ENCODE measurements at regions of chr14 and their contacts with region 1.

Region 1: GRCh38 chr14:21768116-21768874 is 94.7 kb upstream of the OR4E1 start:
- DNase-seq: peak in 4 of 14 experiments; percentile 9 to 72 (median 63)
- ATAC-seq: peak; percentile 91
- H3K4me3 ChIP-seq: peak overlapping the region; percentile 26
- H3K4me3 Mint-ChIP-seq: peak overlapping the region; percentile 69
- H3K27ac ChIP-seq: no peak overlapping the region
- H3K27ac Mint-ChIP-seq: peak overlapping the region; percentile 77
- H3K4me1 ChIP-seq: no peaks in the 10 kb centered on the region
- H3K4me1 Mint-ChIP-seq: peaks cover 6% of the 10 kb centered on the region
- H3K27me3 ChIP-seq: no peaks in the 10 kb centered on the region
- H3K27me3 Mint-ChIP-seq: peaks cover 12% of the 10 kb centered on the region
- CTCF ChIP-seq: peak; percentile 74

Region 2: GRCh38 chr14:21748869-21749303 is 19.4 kb before region 1 on chr14:
- CTCF ChIA-PET with region 1: interaction called, 7 read pairs
- POLR2A ChIA-PET with region 1: interaction called, 3 read pairs
- intact Hi-C with region 1: loop called in 1 of 2 experiments (anchors 2 kb)
- DNase-seq: peak; percentile 14 to 76 (median 44)
- ATAC-seq: peak; percentile 78
- H3K4me3 ChIP-seq: peak overlapping the region; percentile 17
- H3K4me3 Mint-ChIP-seq: peak overlapping the region; percentile 26
- H3K27ac ChIP-seq: no peak overlapping the region
- H3K27ac Mint-ChIP-seq: peak overlapping the region; percentile 57
- H3K4me1 ChIP-seq: no peaks in the 10 kb centered on the region
- H3K4me1 Mint-ChIP-seq: peaks cover 11% of the 10 kb centered on the region
- H3K27me3 ChIP-seq: no peaks in the 10 kb centered on the region
- H3K27me3 Mint-ChIP-seq: peaks cover 26% of the 10 kb centered on the region
- CTCF ChIP-seq: peak; percentile 78

Region 3: GRCh38 chr14:22213120-22213519 is 444.8 kb after region 1 on chr14:
- CTCF ChIA-PET with region 1: no interaction called
- POLR2A ChIA-PET with region 1: no interaction called
- intact Hi-C with region 1: no loop called
- DNase-seq: no peak
- ATAC-seq: no peak
- H3K4me3 ChIP-seq: no peak overlapping the region
- H3K4me3 Mint-ChIP-seq: no peak overlapping the region
- H3K27ac ChIP-seq: no peak overlapping the region
- H3K27ac Mint-ChIP-seq: no peak overlapping the region
- H3K4me1 ChIP-seq: no peaks in the 10 kb centered on the region
- H3K4me1 Mint-ChIP-seq: no peaks in the 10 kb centered on the region
- H3K27me3 ChIP-seq: no peaks in the 10 kb centered on the region
- H3K27me3 Mint-ChIP-seq: no peaks in the 10 kb centered on the region
- CTCF ChIP-seq: no peak